Activated CD4-positive, alpha-beta T cell treated with anti-CD3 and anti-CD28 coated beads, Interleukin-2, amount 10 ng/mL, durations not matched to agents 24 days and 14 days (primary cell): ENCODE measurements at regions of chr10 and their contacts with region 1.

Region 1: GRCh38 chr10:61882621-61883373 is 18.7 kb upstream of the ARID5B start:
- DNase-seq: no peak
- H3K4me3 Mint-ChIP-seq: peak overlapping the region; percentile 32
- H3K27ac Mint-ChIP-seq: peak overlapping the region; percentile 79
- H3K4me1 Mint-ChIP-seq: peaks cover 16% of the 10 kb centered on the region
- H3K27me3 Mint-ChIP-seq: peaks cover 2% of the 10 kb centered on the region

Region 2: DNA sequence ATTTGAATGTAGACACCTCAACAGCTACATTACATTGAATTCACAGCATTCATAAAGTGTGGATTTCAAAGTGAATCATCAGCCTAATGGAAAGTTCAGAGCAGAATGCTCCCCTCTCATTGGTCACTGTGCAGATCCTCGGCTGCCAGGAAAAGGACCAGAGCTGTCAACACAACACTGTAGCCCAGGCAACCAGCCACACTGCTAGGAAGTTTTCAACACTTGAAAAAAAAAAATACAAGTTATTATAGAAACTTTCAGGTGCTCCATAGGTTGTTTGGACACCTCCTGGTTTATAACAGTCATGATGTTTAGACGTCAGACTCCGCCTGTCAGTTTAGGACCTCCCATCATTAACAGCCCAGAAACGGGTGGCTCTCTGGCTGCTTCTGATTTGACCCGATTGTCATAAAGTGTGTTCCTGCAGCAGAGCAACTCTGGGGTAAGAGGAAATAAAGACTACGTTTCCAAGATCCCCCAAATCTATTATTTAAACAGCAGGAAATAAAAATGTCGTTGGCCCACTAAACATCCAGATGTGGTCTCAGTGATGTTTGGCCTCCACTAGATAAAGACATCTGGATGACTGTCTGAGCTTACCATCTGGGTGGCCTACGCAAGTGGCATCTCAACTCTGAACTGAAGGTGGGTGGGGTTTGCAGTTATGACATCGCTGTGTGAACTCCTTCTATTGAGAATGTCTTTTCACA is 102.7 kb before region 1 on chr10:
- intact Hi-C with region 1: loop called (anchors 5 kb)
- DNase-seq: peak; percentile 66
- H3K4me3 Mint-ChIP-seq: no peak overlapping the region
- H3K27ac Mint-ChIP-seq: peak overlapping the region; percentile 41
- H3K4me1 Mint-ChIP-seq: peaks cover 35% of the 10 kb centered on the region
- H3K27me3 Mint-ChIP-seq: no peaks in the 10 kb centered on the region

Region 3: GRCh38 chr10:61896854-61897661 is 14.3 kb after region 1 on chr10:
- intact Hi-C with region 1: loop called (anchors 1 kb)
- DNase-seq: peak; percentile 91
- H3K4me3 Mint-ChIP-seq: peak overlapping the region; percentile 92
- H3K27ac Mint-ChIP-seq: peak overlapping the region; percentile 93
- H3K4me1 Mint-ChIP-seq: peaks cover 36% of the 10 kb centered on the region
- H3K27me3 Mint-ChIP-seq: no peaks in the 10 kb centered on the region